ENCODE measurements at regions of chr7 and their contacts with region 1.

Region 1: GRCh38 chr7:6392706-6393666 is 54.8 kb downstream of the DAGLB start:
- DNase-seq: no peak
- H3K4me3 ChIP-seq: no peak overlapping the region
- H3K27ac ChIP-seq: no peak overlapping the region
- H3K4me1 ChIP-seq: 0 out of 7 replicates have a peak, but pooled peaks cover 0 to 3% (median 0%) of the 10 kb centered on the region in 4 experiments
- H3K27me3 ChIP-seq: no peaks in the 10 kb centered on the region
- CTCF ChIP-seq: no peak
- EP300 ChIP-seq: no peak
- POLR2A ChIP-seq: no peak
- RAD21 ChIP-seq: no peak

Region 2: DNA sequence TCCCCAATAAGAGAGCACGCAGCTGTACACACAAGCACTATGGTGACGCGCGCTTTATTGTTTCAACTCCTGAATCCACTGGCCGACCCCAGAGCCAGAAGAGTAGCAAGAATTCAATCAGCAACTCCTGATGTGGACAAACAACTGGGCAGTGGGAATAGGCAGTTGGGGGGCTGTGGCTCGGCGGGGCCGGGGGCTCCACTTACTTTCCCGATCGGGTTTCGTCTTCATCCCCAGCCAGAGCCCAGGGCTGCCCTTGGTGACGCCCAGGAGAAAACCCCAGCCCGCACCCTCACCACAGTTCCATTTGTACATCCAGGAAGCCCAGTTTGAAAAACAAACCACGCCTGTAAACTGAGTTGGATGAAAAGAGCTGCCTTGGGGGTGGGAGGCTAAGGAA is 16.1 kb after region 1 on chr7:
- CTCF ChIA-PET with region 1: interaction called, 3 read pairs
- POLR2A ChIA-PET with region 1: interaction called, 10 read pairs
- DNase-seq: no peak
- H3K4me3 ChIP-seq: no peak overlapping the region
- H3K27ac ChIP-seq: no peak overlapping the region
- H3K4me1 ChIP-seq: no peaks in the 10 kb centered on the region
- H3K27me3 ChIP-seq: no peaks in the 10 kb centered on the region
- CTCF ChIP-seq: no peak
- EP300 ChIP-seq: no peak
- POLR2A ChIP-seq: no peak
- RAD21 ChIP-seq: no peak

Region 3: DNA sequence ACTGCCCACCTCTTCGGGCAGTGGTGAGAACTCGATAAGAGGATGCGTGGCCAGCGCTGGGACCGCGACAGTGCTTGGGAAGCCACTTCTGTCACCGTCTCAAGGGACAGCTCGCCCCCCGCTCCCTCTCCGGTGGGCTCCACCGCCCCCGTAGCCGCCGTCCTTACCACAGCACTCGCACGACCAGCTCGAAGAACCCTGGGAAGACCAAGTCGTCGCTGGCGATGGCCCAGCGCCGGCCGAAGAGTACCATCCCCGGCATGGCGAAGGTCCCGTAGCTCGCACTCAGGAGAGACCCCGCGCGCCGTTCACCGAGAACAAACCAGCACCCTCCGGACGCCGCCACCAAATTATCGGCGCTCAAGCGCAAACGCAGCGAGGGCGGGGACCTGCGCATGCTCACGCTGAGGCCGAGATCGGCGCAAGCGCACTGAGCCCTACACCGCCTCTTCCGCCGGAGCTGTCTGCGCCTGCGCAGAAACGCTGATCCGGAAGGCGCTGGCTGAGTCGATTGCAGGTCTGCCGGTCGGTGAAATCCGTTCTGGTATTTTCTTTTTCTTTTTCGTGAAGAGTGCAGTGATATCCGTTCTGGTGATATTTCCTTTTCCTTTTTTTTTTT is 54.7 kb after region 1 on chr7 and contains the start of gene DAGLB:
- CTCF ChIA-PET with region 1: no interaction called
- POLR2A ChIA-PET with region 1: no interaction called
- DNase-seq: peak; percentile 89 to 96
- H3K4me3 ChIP-seq: peak within 1 kb of the TSS; percentile 88 to 97 (median 92)
- H3K27ac ChIP-seq: peak within 1 kb of the TSS; percentile 76; the same call in 1 of the 2 replicates
- H3K4me1 ChIP-seq: no peaks in the 10 kb centered on the region; a peak in 1 of 7 replicates
- H3K27me3 ChIP-seq: no peaks in the 10 kb centered on the region
- CTCF ChIP-seq: no peak
- EP300 ChIP-seq: no peak
- POLR2A ChIP-seq: peak; percentile 61 to 90
- RAD21 ChIP-seq: no peak
- total RNA-seq, gene DAGLB: 22.1 and 27.0 TPM in 2 replicates